ENCODE measurements at regions of chr4 and their contacts with region 1.

Region 1: DNA sequence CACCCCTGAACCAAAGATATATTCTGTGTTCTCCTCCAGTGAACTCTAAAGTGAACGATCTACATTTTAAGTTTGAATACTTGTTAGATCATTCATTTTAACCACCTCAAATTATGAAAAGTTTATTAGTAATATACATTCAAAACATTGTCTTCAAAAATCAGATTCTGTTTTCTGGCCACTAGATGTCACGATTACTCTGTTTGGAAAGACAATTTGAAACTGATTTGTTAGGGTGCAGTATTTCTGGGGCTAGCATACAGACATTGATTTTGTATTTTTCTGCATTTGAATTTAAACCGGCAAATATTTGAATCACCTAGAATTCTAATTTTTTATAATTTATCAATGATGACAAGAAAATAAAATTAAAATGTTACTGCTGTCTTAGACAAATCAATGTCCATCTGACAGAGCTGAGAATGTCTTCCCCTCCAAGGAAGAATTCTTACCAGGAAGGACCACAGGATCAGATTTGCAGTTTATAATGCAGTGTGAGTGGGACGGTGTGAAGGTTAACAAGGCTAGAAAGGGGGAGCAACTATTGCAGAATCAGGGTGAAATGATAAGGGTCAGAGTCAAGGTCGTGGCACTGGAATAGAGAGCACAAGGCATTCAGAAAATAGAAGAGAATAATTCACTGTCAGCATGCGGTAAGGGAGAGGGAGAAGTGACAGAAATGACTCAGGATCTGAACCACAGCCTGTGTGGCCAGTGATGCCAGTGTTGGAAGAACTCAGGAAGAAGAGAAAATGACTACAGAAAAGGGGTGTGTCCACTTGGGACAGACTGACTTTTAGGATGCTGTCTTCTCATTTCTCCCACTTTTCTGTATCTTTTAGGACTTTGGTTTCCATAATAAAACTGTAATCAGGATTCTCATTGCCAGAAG is 91.6 kb downstream of the ANXA10 start:
- DNase-seq: no peak
- H3K4me3 Mint-ChIP-seq: no peak overlapping the region
- H3K27ac Mint-ChIP-seq: no peak overlapping the region
- H3K4me1 Mint-ChIP-seq: peaks cover 5% of the 10 kb centered on the region
- H3K27me3 Mint-ChIP-seq: no peaks in the 10 kb centered on the region

Region 2: GRCh38 chr4:168153596-168154440 is 30.1 kb before region 1 on chr4:
- intact Hi-C with region 1: no loop called
- DNase-seq: peak; percentile 14
- H3K4me3 Mint-ChIP-seq: no peak overlapping the region
- H3K27ac Mint-ChIP-seq: no peak overlapping the region
- H3K4me1 Mint-ChIP-seq: peaks cover 8% of the 10 kb centered on the region
- H3K27me3 Mint-ChIP-seq: no peaks in the 10 kb centered on the region

Region 3: DNA sequence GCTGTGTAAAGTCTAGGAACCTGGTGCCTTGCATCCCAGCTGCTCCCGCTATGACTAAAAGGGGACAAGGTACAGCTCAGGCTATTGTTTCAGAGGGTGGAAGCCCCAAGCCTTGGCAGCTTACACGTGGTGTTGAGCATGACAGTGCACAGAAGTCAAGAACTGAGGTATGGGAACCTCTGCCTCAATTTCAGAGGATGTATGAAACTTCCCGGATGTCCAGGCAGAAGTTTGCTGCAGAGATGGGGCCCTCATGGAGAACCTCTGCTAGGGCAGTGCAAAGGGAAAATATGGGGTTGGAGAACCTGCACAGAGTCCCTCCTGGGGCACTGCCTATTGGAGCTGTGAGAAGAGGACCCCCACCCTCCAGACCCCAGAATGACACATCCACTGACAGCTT is 58.0 kb after region 1 on chr4:
- intact Hi-C with region 1: no loop called
- DNase-seq: no peak
- H3K4me3 Mint-ChIP-seq: no peak overlapping the region
- H3K27ac Mint-ChIP-seq: no peak overlapping the region
- H3K4me1 Mint-ChIP-seq: no peaks in the 10 kb centered on the region
- H3K27me3 Mint-ChIP-seq: no peaks in the 10 kb centered on the region

Region 4: GRCh38 chr4:168551945-168552695 is 368.2 kb after region 1 on chr4:
- intact Hi-C with region 1: loop called (anchors 5 kb)
- DNase-seq: no peak
- H3K4me3 Mint-ChIP-seq: no peak overlapping the region
- H3K27ac Mint-ChIP-seq: no peak overlapping the region
- H3K4me1 Mint-ChIP-seq: no peaks in the 10 kb centered on the region
- H3K27me3 Mint-ChIP-seq: peaks cover 5% of the 10 kb centered on the region

Region 5: DNA sequence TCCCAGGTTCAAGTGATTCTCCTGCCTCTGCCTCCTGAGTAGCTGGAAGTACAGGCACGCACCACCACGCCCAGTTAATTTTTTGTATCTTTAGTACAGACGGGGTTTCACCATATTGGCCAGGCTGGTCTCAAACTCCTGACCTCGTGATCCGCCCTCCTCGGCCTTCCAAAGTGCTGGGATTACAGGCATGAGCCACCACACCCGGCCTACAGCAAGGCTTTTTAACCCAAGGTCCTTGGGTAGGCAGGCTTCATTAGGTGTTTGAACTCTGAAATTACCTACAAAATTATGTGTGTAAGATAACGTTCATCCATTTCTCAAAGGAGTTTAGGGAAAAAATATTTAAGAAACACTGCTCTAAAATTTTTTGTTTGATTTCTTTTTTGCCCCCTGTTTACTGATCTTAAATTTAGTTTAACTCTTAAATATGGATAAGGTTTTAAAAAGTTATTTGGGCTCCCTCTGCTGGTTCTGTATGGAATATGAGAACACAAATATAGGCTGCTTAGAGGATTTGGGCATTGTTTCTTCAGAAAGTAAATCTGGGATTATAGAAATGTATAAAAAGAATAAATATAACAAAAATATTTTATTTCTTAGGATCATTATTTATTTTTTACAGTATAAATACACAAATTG is 733.3 kb after region 1 on chr4:
- intact Hi-C with region 1: loop called (anchors 1 kb)
- DNase-seq: no peak
- H3K4me3 Mint-ChIP-seq: no peak overlapping the region
- H3K27ac Mint-ChIP-seq: no peak overlapping the region
- H3K4me1 Mint-ChIP-seq: no peaks in the 10 kb centered on the region
- H3K27me3 Mint-ChIP-seq: peaks cover 2% of the 10 kb centered on the region

Measured in activated T-helper 1 cell treated with anti-CD3 and anti-CD28 coated beads, Interleukin-12 subunit alpha, Interleukin-12 subunit beta, Interleukin-2, Interleukin-4 antibody, amounts not matched to agents 30 ng/mL and 10 ng/mL and 1 ng/mL, durations not matched to agents 14 hours and 24 hours and 36 hours (primary cell).